ENCODE measurements at regions of chr1 and their contacts with region 1.

Region 1: DNA sequence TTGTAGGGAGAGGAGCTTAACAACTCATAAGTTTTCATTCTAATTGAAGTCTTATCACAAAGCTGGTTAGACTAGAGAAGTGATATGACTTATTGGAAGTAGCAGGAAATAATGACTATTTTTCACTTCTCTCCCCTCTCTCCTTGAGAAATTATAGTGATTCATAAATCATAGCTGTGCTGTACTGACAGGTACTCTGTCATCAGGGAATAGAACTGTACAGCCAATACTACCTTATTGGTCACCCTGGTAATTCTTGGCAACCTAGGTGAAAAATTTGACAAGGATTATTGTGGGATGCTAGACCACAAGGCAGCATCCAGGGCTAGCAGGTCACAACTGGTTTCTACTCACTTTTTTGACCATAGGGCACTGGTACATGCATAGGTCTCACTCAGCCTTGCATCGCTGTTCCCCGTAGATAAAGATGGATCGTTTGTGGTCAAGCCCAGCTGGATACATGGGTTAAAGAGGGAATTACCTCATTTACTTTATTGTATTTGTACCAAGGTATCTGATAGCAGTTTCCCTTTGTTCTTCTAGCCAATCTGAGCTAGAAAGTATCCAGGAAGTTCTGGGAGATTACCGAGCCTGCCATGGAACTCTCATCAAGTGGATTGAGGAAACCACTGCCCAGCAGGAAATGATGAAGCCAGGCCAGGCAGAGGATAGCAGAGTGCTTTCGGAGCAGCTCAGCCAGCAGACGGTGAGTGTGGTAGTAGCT is 113.6 kb downstream of the MACF1 start:
- DNase-seq: peak; percentile 56
- ATAC-seq: peak; percentile 61 to 68

Region 2: GRCh38 chr1:39378377-39378776 is 60.3 kb after region 1 on chr1:
- intact Hi-C with region 1: no loop called
- DNase-seq: no peak
- ATAC-seq: no peak

Region 3: DNA sequence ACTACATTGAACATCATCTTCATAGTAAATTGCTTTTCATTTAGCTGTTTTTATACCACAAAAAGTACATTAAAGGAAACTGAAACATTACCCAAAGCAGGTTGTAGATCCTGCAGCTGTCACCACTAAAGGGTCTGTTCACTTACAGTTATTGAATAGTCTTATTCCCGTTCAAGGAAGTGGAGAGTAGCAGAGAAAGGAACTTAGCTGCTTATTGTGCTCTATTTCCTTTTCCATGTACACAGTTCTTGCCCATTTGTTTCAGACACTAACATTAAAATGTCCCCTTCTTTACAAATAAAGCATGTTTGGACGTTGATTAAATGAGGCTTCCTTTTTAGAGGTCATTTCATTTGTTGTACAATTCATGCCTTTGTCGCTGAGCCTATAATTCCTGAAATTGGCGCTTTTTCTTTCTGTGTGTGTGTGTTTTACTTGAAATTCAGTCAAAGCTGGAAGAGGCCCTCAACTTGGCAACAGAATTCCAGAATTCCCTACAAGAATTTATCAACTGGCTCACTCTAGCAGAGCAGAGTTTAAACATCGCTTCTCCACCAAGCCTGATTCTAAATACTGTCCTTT is 129.0 kb after region 1 on chr1:
- intact Hi-C with region 1: loop called in 1 of 2 experiments (anchors 10 kb)
- DNase-seq: no peak
- ATAC-seq: no peak

Measured in left cardiac atrium (tissue), 4 donors.